ENCODE measurements at regions of chr2 and their contacts with region 1.

Region 1: GRCh38 chr2:8119782-8120505 is 561.9 kb upstream of the ID2 start:
- DNase-seq: no peak

Region 2: GRCh38 chr2:7071916-7072556 is 1047.9 kb before region 1 on chr2:
- intact Hi-C with region 1: no loop called
- DNase-seq: no peak

Region 3: GRCh38 chr2:7609974-7610373 is 510.0 kb before region 1 on chr2:
- intact Hi-C with region 1: no loop called
- DNase-seq: no peak

Region 4: DNA sequence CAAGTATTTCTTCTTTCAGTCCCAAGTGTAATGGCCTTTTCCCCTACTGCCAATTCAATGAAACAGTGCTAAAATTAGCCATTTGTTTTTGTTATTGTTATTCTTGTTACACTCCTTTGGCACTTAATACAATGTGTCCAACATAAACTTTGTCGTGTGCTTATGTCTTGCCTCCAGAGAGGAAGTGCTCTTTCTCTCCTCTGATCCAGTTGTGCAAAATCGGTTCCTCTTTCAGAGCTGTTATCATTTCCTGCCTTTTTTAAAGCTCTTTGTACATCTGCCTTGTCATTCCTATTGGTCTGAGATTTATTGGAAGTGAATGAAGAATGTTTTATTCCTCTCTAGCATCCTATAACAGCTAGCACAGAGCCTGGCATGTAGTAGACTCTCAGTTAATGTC is 61.3 kb before region 1 on chr2:
- intact Hi-C with region 1: loop called (anchors 5 kb)
- DNase-seq: no peak

Region 5: GRCh38 chr2:8076448-8077342 is 43.2 kb before region 1 on chr2:
- intact Hi-C with region 1: no loop called
- DNase-seq: no peak

Region 6: GRCh38 chr2:8134985-8135682 is 15.2 kb after region 1 on chr2:
- intact Hi-C with region 1: loop called (anchors 2 kb)
- DNase-seq: no peak

Region 7: GRCh38 chr2:8152392-8153257 is 32.7 kb after region 1 on chr2:
- intact Hi-C with region 1: no loop called
- DNase-seq: no peak

Measured in cardiac septum (tissue), 1 donor.